ENCODE measurements at regions of chr5 and their contacts with region 1.

Region 1: GRCh38 chr5:157142317-157143126 is at the start of gene MED7:
- DNase-seq: peak; percentile 96
- H3K4me3 ChIP-seq: peak within 1 kb of the TSS; percentile 89
- H3K27ac ChIP-seq: peak within 1 kb of the TSS; percentile 91
- H3K4me1 ChIP-seq: peaks cover 10% of the 10 kb centered on the region
- H3K27me3 ChIP-seq: no peaks in the 10 kb centered on the region
- CTCF ChIP-seq: no peak
- total RNA-seq, gene MED7: 13.9 to 14.9 TPM

Region 2: DNA sequence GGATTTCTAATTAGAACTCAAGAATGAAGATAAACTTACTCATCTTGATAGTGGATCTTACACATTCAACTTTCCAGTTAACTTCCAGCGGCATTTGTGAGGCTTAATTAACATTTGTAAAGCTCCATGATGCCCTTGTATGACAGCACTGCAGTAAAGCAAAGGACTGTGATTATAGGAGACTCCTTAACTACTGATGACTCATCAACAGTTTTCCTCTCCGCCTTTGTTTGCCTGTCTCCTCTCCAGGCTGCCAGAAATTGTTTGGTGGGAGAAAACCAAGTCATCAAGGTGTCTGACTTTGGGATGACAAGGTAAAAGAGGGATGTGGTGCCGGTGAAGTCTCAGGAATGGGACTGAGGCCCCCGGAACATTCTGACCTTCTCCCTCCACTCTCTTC is 103.0 kb after region 1 on chr5:
- intact Hi-C with region 1: loop called (anchors 10 kb)
- DNase-seq: no peak
- H3K4me3 ChIP-seq: no peak overlapping the region
- H3K27ac ChIP-seq: no peak overlapping the region
- H3K4me1 ChIP-seq: no peaks in the 10 kb centered on the region
- H3K27me3 ChIP-seq: no peaks in the 10 kb centered on the region
- CTCF ChIP-seq: no peak

Measured in colonic mucosa (tissue), 4 donors.